ENCODE measurements at regions of chrX and their contacts with region 1.

Region 1: GRCh38 chrX:72018277-72019112 is 107.8 kb downstream of the NHSL2 start:
- DNase-seq: peak; percentile 81
- H3K4me3 ChIP-seq: no peak overlapping the region
- H3K27ac ChIP-seq: no peak overlapping the region
- H3K27me3 ChIP-seq: peaks cover 6% of the 10 kb centered on the region
- CTCF ChIP-seq: peak; percentile 13

Region 2: GRCh38 chrX:72126539-72127140 is 108.1 kb after region 1 on chrX:
- in situ Hi-C with region 1: loop called (anchors 10 kb)
- DNase-seq: peak; percentile 83
- H3K4me3 ChIP-seq: no peak overlapping the region
- H3K27ac ChIP-seq: no peak overlapping the region
- H3K27me3 ChIP-seq: peaks cover 3% of the 10 kb centered on the region
- CTCF ChIP-seq: peak; percentile 93